ENCODE measurements at regions of chr19 and their contacts with region 1.

Region 1: GRCh38 chr19:55632463-55632834 is 8.1 kb upstream of the ZNF784 start:
- DNase-seq: peak in 1 of 2 experiments; percentile 94
- H3K4me3 ChIP-seq: no peak overlapping the region
- H3K27ac ChIP-seq: no peak overlapping the region
- H3K4me1 ChIP-seq: peaks cover 3 to 6% (median 6%) of the 10 kb centered on the region in 4 experiments; a peak in 6 of 7 replicates
- H3K27me3 ChIP-seq: no peaks in the 10 kb centered on the region
- CTCF ChIP-seq: peak; percentile 23 to 85 (median 83)
- EP300 ChIP-seq: no peak
- POLR2A ChIP-seq: no peak
- RAD21 ChIP-seq: peak; percentile 73 to 81

Region 2: GRCh38 chr19:55503502-55504251 is 128.8 kb before region 1 on chr19:
- CTCF ChIA-PET with region 1: interaction called, 11 read pairs
- POLR2A ChIA-PET with region 1: no interaction called
- DNase-seq: peak; percentile 78 to 100
- H3K4me3 ChIP-seq: peak overlapping the region in 1 of 4 experiments; percentile 43; a peak in 2 of 8 replicates
- H3K27ac ChIP-seq: no peak overlapping the region
- H3K4me1 ChIP-seq: no peaks in the 10 kb centered on the region
- H3K27me3 ChIP-seq: peaks cover 11 to 23% (median 17%) of the 10 kb centered on the region in 4 experiments
- CTCF ChIP-seq: peak; percentile 95 to 98 (median 95)
- EP300 ChIP-seq: no peak
- POLR2A ChIP-seq: no peak
- RAD21 ChIP-seq: peak; percentile 93

Region 3: DNA sequence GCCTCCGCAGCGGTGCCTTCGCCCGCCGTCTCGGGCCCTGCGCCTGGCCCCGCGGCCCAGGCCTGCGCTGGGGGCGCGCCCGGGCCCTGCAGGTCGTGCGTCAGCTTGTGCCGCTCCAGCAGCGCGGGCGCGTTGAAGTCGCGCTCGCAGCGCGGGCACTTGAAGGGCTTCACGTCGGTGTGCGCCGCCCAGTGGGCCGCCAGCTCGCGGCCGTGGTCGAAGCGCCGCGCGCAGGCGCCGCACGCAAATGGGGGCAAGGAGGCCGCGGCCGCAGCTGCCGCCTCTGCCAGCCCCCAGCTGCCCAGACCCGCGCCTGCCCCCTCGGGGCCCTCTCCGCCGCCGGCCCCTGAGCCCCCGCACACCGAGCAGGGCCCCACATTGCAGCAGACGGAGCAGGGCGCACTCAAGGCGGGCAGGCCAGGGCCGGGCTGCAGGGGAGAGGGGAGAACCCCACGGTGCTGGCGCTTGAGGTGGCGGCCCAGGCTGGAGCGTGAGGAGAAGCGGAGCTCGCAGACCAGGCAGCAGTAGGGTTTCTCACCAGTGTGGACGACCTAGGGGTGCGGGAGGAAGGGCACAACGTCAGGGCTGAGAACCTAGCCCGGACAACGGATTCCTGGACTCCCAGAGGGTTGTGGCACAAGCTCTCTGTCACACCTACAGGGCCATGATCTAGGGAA is 39.2 kb before region 1 on chr19:
- CTCF ChIA-PET with region 1: interaction called, 12 read pairs
- POLR2A ChIA-PET with region 1: interaction called, 3 read pairs
- DNase-seq: no peak
- H3K4me3 ChIP-seq: peak overlapping the region in 2 of 4 experiments; percentile 5 to 48; a peak in 3 of 8 replicates
- H3K27ac ChIP-seq: no peak overlapping the region
- H3K4me1 ChIP-seq: peaks cover 0 to 9% (median 3%) of the 10 kb centered on the region in 4 experiments; a peak in 4 of 7 replicates
- H3K27me3 ChIP-seq: peaks cover 0 to 2% (median 0%) of the 10 kb centered on the region in 4 experiments; a peak in 1 of 7 replicates
- CTCF ChIP-seq: no peak
- EP300 ChIP-seq: no peak
- POLR2A ChIP-seq: no peak
- RAD21 ChIP-seq: no peak

Region 4: GRCh38 chr19:55605207-55605636 is 27.2 kb before region 1 on chr19:
- CTCF ChIA-PET with region 1: interaction called, 22 read pairs
- POLR2A ChIA-PET with region 1: interaction called, 25 read pairs
- DNase-seq: peak; percentile 94 to 98
- H3K4me3 ChIP-seq: peak overlapping the region; percentile 54 to 93 (median 68)
- H3K27ac ChIP-seq: peak overlapping the region; percentile 64; the same call in 1 of the 2 replicates
- H3K4me1 ChIP-seq: peaks cover 0 to 14% (median 10%) of the 10 kb centered on the region in 4 experiments; a peak in 6 of 7 replicates
- H3K27me3 ChIP-seq: no peaks in the 10 kb centered on the region
- CTCF ChIP-seq: no peak
- EP300 ChIP-seq: no peak
- POLR2A ChIP-seq: peak; percentile 49 to 71
- RAD21 ChIP-seq: no peak

Region 5: GRCh38 chr19:55653758-55654539 is 21.5 kb after region 1 on chr19:
- CTCF ChIA-PET with region 1: interaction called, 56 read pairs
- POLR2A ChIA-PET with region 1: interaction called, 96 read pairs
- DNase-seq: peak; percentile 98 to 100
- H3K4me3 ChIP-seq: peak overlapping the region; percentile 77 to 91 (median 82)
- H3K27ac ChIP-seq: peak overlapping the region; percentile 98
- H3K4me1 ChIP-seq: peaks cover 3 to 18% (median 10%) of the 10 kb centered on the region in 4 experiments; a peak in 6 of 7 replicates
- H3K27me3 ChIP-seq: no peaks in the 10 kb centered on the region
- CTCF ChIP-seq: peak; percentile 100
- EP300 ChIP-seq: no peak
- POLR2A ChIP-seq: peak in 1 of 2 experiments; percentile 53; a peak in 2 of 3 replicates
- RAD21 ChIP-seq: peak; percentile 46 to 47

Region 6: GRCh38 chr19:55703790-55704215 is 71.4 kb after region 1 on chr19:
- CTCF ChIA-PET with region 1: no interaction called
- POLR2A ChIA-PET with region 1: no interaction called
- DNase-seq: peak; percentile 39 to 92
- H3K4me3 ChIP-seq: no peak overlapping the region
- H3K27ac ChIP-seq: no peak overlapping the region
- H3K4me1 ChIP-seq: no peaks in the 10 kb centered on the region; a peak in 1 of 7 replicates
- H3K27me3 ChIP-seq: no peaks in the 10 kb centered on the region
- CTCF ChIP-seq: peak; percentile 76 to 93 (median 91)
- EP300 ChIP-seq: no peak
- POLR2A ChIP-seq: no peak
- RAD21 ChIP-seq: peak; percentile 50 to 56; a peak in 3 of 4 replicates